Activated T-helper 1 cell treated with anti-CD3 and anti-CD28 coated beads, Interleukin-12 subunit alpha, Interleukin-12 subunit beta, Interleukin-2, Interleukin-4 antibody, amounts not matched to agents 30 ng/mL and 10 ng/mL and 1 ng/mL, durations not matched to agents 14 hours and 24 hours and 36 hours (primary cell): ENCODE measurements at regions of chr11 and their contacts with region 1.

Region 1: GRCh38 chr11:95556342-95557163 is 233.0 kb downstream of the FAM76B start:
- DNase-seq: peak; percentile 6
- H3K4me3 Mint-ChIP-seq: peak overlapping the region; percentile 38
- H3K27ac Mint-ChIP-seq: peak overlapping the region; percentile 86
- H3K4me1 Mint-ChIP-seq: peaks cover 55% of the 10 kb centered on the region
- H3K27me3 Mint-ChIP-seq: no peaks in the 10 kb centered on the region

Region 2: DNA sequence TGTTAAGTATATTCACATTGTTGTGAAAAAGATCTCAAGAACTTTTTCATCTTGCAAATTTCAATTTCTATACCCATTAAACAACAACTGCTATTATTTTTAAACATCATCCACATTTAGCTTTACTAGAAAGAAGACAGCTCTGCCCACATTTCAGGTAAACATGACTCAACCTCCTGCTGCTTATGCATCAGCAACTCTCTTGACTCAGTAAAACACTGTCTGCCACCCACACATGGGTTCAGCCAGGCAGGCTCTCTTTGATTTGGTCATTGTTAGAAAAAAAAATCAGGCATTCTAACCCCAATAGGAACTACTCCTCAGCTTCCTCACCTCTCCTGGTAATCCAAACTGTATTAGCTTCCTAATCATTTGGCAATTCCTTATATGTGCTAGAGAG is 472.0 kb before region 1 on chr11:
- intact Hi-C with region 1: loop called (anchors 5 kb)
- DNase-seq: peak; percentile 32
- H3K4me3 Mint-ChIP-seq: no peak overlapping the region
- H3K27ac Mint-ChIP-seq: peak overlapping the region; percentile 40
- H3K4me1 Mint-ChIP-seq: peaks cover 70% of the 10 kb centered on the region
- H3K27me3 Mint-ChIP-seq: no peaks in the 10 kb centered on the region

Region 3: GRCh38 chr11:95296621-95297025 is 259.9 kb before region 1 on chr11:
- intact Hi-C with region 1: loop called (anchors 1 kb)
- DNase-seq: no peak
- H3K4me3 Mint-ChIP-seq: no peak overlapping the region
- H3K27ac Mint-ChIP-seq: no peak overlapping the region
- H3K4me1 Mint-ChIP-seq: peaks cover 24% of the 10 kb centered on the region
- H3K27me3 Mint-ChIP-seq: no peaks in the 10 kb centered on the region

Region 4: GRCh38 chr11:95478003-95478402 is 78.5 kb before region 1 on chr11:
- intact Hi-C with region 1: no loop called
- DNase-seq: no peak
- H3K4me3 Mint-ChIP-seq: no peak overlapping the region
- H3K27ac Mint-ChIP-seq: no peak overlapping the region
- H3K4me1 Mint-ChIP-seq: no peaks in the 10 kb centered on the region
- H3K27me3 Mint-ChIP-seq: peaks cover 2% of the 10 kb centered on the region

Region 5: GRCh38 chr11:95536047-95536690 is 20.4 kb before region 1 on chr11:
- intact Hi-C with region 1: loop called (anchors 2 kb)
- DNase-seq: no peak
- H3K4me3 Mint-ChIP-seq: no peak overlapping the region
- H3K27ac Mint-ChIP-seq: no peak overlapping the region
- H3K4me1 Mint-ChIP-seq: peaks cover 13% of the 10 kb centered on the region
- H3K27me3 Mint-ChIP-seq: peaks cover 2% of the 10 kb centered on the region

Region 6: GRCh38 chr11:95641495-95641894 is 84.9 kb after region 1 on chr11:
- intact Hi-C with region 1: loop called (anchors 1 kb)
- DNase-seq: peak; percentile 47
- H3K4me3 Mint-ChIP-seq: no peak overlapping the region
- H3K27ac Mint-ChIP-seq: peak overlapping the region; percentile 70
- H3K4me1 Mint-ChIP-seq: peaks cover 24% of the 10 kb centered on the region
- H3K27me3 Mint-ChIP-seq: no peaks in the 10 kb centered on the region

Region 7: GRCh38 chr11:95680169-95680929 is 123.8 kb after region 1 on chr11:
- intact Hi-C with region 1: loop called (anchors 1 kb)
- DNase-seq: no peak
- H3K4me3 Mint-ChIP-seq: no peak overlapping the region
- H3K27ac Mint-ChIP-seq: peak overlapping the region; percentile 56
- H3K4me1 Mint-ChIP-seq: peaks cover 90% of the 10 kb centered on the region
- H3K27me3 Mint-ChIP-seq: no peaks in the 10 kb centered on the region

Region 8: GRCh38 chr11:95705485-95706124 is 149.1 kb after region 1 on chr11:
- intact Hi-C with region 1: loop called (anchors 1 kb)
- DNase-seq: peak; percentile 77
- H3K4me3 Mint-ChIP-seq: no peak overlapping the region
- H3K27ac Mint-ChIP-seq: no peak overlapping the region
- H3K4me1 Mint-ChIP-seq: peaks cover 17% of the 10 kb centered on the region
- H3K27me3 Mint-ChIP-seq: peaks cover 3% of the 10 kb centered on the region